Left ventricle myocardium inferior (tissue), 1 donor: ENCODE measurements at regions of chr2 and their contacts with region 1.

Region 1: GRCh38 chr2:204625167-204625566 is 79.9 kb downstream of the PARD3B start:
- DNase-seq: no peak
- H3K4me3 ChIP-seq: no peak overlapping the region
- H3K27ac ChIP-seq: no peak overlapping the region
- H3K4me1 ChIP-seq: peaks cover 5% of the 10 kb centered on the region
- H3K27me3 ChIP-seq: no peaks in the 10 kb centered on the region
- CTCF ChIP-seq: peak; percentile 28

Region 2: DNA sequence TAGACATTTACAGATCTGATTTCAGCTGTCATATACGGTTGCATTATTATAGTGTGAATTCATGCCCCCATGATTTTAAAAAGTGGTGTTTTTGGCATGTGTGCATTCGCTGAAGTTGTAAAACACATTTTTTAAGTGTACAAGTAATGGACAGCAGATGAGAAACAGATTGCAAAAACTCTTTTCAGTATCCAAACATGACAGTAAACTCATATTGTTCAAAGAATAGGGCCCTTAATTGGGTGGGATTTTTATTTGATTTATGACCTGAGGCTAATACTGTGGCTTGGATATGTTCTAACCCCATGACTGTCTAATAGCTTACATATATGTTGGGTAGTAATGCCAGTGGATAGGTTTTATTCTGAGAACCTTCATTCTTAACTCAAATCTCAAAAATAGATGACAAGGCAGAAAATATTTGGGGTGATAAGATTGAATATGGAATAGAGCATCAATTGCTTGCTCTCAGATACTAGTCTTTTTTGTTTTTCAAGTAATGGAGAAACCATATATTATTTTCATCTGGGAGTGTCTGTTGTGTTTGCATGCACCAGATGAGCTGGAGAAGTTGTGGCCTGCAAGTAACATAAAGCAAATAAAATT is 38.8 kb after region 1 on chr2:
- intact Hi-C with region 1: loop called (anchors 2 kb)
- DNase-seq: no peak
- H3K4me3 ChIP-seq: no peak overlapping the region
- H3K27ac ChIP-seq: no peak overlapping the region
- H3K4me1 ChIP-seq: peaks cover 18% of the 10 kb centered on the region
- H3K27me3 ChIP-seq: no peaks in the 10 kb centered on the region
- CTCF ChIP-seq: no peak